Tibial artery (tissue), 4 donors: ENCODE measurements at regions of chr10 and their contacts with region 1.

Region 1: DNA sequence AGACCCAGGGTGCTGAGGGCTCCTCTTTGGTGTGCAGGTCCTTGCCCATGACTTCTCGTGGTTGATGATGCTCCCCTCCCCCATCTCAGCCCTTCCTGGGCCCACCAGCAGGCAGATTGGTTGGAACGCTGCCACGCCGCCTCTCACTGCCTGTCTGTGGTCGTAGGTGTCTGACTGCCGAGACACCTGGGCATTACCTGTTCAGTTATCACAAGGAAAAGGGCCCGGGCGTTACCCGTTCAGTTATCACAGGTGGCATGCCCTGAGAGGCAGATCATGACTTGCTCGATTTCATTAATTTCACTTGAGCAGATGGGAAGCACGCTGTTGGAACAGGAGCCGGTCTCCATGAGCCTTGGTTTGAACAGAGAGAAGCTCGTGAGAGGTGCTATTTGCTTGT is 42.5 kb downstream of the TACR2 start:
- DNase-seq: no peak
- H3K4me3 ChIP-seq: no peak overlapping the region
- H3K27ac ChIP-seq: peak overlapping the region in 1 of 2 donors; percentile 63
- H3K4me1 ChIP-seq: peaks cover 0 to 37% (median 20%) of the 10 kb centered on the region in 4 donors
- H3K27me3 ChIP-seq: no peaks in the 10 kb centered on the region
- CTCF ChIP-seq: no peak

Region 2: DNA sequence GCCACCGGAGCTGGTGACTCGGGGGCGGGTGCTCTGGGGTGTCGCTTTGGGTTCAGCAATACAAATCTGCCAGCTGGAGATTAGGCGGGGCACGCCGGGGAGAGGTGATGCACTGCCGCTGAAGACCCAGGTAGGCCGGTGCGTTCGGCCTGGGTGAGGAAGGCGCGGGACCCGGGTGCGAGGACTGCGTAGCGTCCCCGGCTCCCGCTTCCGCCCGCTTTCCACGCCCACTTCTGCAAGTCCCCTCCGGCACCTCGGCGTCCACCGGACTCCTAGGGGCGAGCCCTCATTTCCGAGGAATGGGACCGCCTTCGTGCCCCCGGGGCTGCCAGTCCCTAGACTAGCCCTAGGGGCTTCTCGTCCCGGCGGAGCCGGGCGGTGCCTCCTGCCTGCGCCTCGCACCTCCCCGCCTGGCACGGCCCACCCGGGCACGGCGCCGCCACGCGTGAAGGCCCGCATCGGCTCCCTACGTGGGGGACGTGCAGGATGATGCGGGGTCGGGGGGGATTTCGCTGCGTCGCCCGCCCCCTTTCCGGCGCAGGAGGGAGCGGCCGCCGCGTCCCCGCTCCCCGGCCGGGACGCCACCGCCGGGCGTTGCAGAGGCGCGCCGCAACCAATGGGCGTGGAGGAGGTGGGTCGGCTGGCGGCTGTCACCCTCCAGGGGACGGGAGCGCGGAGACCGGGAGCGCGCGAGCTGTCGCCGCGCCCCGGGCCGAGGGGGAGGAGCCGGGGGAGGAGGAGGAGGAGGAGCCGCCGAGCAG is 56.0 kb before region 1 on chr10:
- intact Hi-C with region 1: loop called (anchors 5 kb)
- DNase-seq: peak; percentile 88 to 95
- H3K4me3 ChIP-seq: peak overlapping the region; percentile 85 to 91
- H3K27ac ChIP-seq: peak overlapping the region; percentile 91 to 95
- H3K4me1 ChIP-seq: peaks cover 4 to 47% (median 31%) of the 10 kb centered on the region in 4 donors
- H3K27me3 ChIP-seq: no peaks in the 10 kb centered on the region
- CTCF ChIP-seq: no peak

Region 3: DNA sequence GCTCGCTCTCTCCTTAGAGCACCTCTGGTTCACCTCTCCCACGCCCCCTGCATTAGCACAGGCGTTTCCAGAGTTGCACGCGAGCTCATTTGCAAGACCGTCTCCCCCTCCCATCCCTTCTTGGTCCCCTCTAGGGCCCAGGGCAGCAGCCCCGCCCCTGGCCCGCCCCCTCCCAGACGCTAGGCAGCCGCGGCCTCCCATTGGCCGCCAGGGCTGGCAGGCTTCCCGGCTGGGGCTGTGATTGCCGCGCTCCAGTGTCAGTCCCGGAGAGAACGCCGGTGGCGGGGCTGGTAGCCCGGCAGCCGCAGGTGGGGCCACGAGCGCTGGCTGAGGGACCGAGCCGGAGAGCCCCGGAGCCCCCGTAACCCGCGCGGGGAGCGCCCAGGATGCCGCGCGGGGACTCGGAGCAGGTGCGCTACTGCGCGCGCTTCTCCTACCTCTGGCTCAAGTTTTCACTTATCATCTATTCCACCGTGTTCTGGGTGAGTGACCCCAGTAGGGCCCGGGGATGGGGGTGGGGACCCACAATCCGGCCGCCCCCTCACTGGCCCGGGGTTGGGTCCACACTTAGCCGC is 77.1 kb after region 1 on chr10 and contains the start of gene TSPAN15:
- intact Hi-C with region 1: no loop called
- DNase-seq: peak; percentile 81 to 94
- H3K4me3 ChIP-seq: peak within 1 kb of the TSS; percentile 71 to 88
- H3K27ac ChIP-seq: peak within 1 kb of the TSS; percentile 67 to 70
- H3K4me1 ChIP-seq: peaks cover 0 to 41% (median 18%) of the 10 kb centered on the region in 4 donors
- H3K27me3 ChIP-seq: no peaks in the 10 kb centered on the region
- CTCF ChIP-seq: peak in 1 of 2 experiments; percentile 6